ENCODE measurements at regions of chr19 and their contacts with region 1.

Region 1: GRCh38 chr19:54266133-54266532 is 9.1 kb upstream of the LILRB5 start:
- DNase-seq: peak; percentile 80
- ATAC-seq: peak; percentile 69
- H3K4me3 ChIP-seq: no peak overlapping the region
- H3K4me3 Mint-ChIP-seq: no peak overlapping the region
- H3K27ac ChIP-seq: no peak overlapping the region
- H3K27ac Mint-ChIP-seq: no peak overlapping the region
- H3K4me1 ChIP-seq: no peaks in the 10 kb centered on the region
- H3K4me1 Mint-ChIP-seq: peaks cover 4% of the 10 kb centered on the region
- H3K27me3 ChIP-seq: peaks cover 0 to 20% (median 6%) of the 10 kb centered on the region in 4 experiments
- H3K27me3 Mint-ChIP-seq: peaks cover 34% of the 10 kb centered on the region
- CTCF ChIP-seq: peak; percentile 87

Region 2: DNA sequence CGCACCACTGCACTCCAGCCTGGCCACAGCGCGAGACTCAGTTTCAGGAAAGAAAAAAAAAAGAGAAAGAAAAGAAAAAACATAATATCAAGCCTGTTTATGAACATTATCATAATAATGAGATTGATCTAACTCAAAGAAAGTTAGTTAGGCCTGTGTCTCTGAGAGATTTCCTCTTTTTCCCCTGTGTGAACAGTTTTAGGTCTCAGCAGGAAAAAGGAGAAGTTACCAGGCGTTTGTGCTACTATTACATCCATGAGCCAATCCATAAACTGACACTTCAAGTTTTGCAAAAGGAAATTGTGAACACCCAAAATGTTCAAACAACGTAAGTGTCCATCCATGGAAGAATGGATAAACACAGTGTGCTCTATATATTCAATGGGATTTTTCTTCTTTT is 188.8 kb before region 1 on chr19:
- CTCF ChIA-PET with region 1: no interaction called
- POLR2A ChIA-PET with region 1: no interaction called
- intact Hi-C with region 1: no loop called
- DNase-seq: no peak
- ATAC-seq: no peak
- H3K4me3 ChIP-seq: no peak overlapping the region
- H3K4me3 Mint-ChIP-seq: no peak overlapping the region
- H3K27ac ChIP-seq: no peak overlapping the region
- H3K27ac Mint-ChIP-seq: no peak overlapping the region
- H3K4me1 ChIP-seq: no peaks in the 10 kb centered on the region
- H3K4me1 Mint-ChIP-seq: no peaks in the 10 kb centered on the region
- H3K27me3 ChIP-seq: peaks cover 0 to 3% (median 0%) of the 10 kb centered on the region in 4 experiments
- H3K27me3 Mint-ChIP-seq: peaks cover 6% of the 10 kb centered on the region
- CTCF ChIP-seq: no peak

Region 3: DNA sequence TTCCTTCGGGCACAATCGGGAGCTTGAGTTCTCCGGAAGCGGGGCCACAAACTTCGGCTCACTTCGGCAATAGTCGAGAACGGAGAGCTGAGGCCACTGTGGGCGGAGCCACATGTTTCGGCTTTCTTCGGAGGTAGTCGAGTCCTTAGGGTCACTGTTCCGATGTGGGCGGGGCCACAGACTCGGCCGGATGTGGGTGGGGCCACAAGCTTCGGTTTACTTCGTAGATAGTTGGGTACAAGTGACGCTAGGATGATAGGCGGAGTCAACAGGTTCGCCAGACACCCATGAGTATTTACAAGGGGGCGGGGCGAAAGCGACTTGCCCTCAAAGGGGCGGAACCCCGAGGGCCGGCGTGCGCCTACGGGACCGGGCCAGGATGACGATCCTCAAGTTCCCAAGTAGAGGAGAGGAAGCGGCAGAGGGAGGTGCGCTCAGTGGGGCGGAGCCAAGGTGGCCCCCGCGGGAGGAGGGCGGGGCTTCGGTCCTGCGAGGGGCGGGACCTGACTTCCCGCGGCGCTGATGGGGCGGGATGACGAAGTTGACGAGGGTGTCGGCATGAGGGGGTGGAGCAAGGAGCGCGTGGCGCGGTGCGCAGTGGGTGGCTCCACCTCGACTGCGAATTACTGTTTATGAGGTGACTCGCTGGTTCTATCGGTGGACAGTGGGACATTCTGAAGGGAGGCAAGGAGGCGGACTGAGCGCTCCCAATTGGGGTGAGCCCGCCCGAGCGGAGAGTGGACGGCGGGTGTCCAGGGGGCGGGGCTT is 76.2 kb before region 1 on chr19:
- CTCF ChIA-PET with region 1: interaction called, 14 read pairs
- POLR2A ChIA-PET with region 1: no interaction called
- intact Hi-C with region 1: no loop called
- DNase-seq: peak; percentile 100
- ATAC-seq: peak; percentile 51
- H3K4me3 ChIP-seq: peak overlapping the region; percentile 31 to 87 (median 81)
- H3K4me3 Mint-ChIP-seq: peak overlapping the region; percentile 94
- H3K27ac ChIP-seq: peak overlapping the region; percentile 96 to 99
- H3K27ac Mint-ChIP-seq: peak overlapping the region; percentile 99
- H3K4me1 ChIP-seq: peaks cover 18 to 22% of the 10 kb centered on the region in 2 donors
- H3K4me1 Mint-ChIP-seq: peaks cover 32% of the 10 kb centered on the region
- H3K27me3 ChIP-seq: no peaks in the 10 kb centered on the region
- H3K27me3 Mint-ChIP-seq: no peaks in the 10 kb centered on the region
- CTCF ChIP-seq: no peak

Region 4: GRCh38 chr19:54287456-54287855 is 21.3 kb after region 1 on chr19:
- CTCF ChIA-PET with region 1: interaction called, 49 read pairs
- POLR2A ChIA-PET with region 1: interaction called, 3 read pairs
- intact Hi-C with region 1: no loop called
- DNase-seq: no peak
- ATAC-seq: no peak
- H3K4me3 ChIP-seq: no peak overlapping the region
- H3K4me3 Mint-ChIP-seq: no peak overlapping the region
- H3K27ac ChIP-seq: no peak overlapping the region
- H3K27ac Mint-ChIP-seq: peak overlapping the region; percentile 21
- H3K4me1 ChIP-seq: peaks cover 70 to 76% of the 10 kb centered on the region in 2 donors
- H3K4me1 Mint-ChIP-seq: peaks cover 85% of the 10 kb centered on the region
- H3K27me3 ChIP-seq: peaks cover 0 to 8% (median 0%) of the 10 kb centered on the region in 4 experiments
- H3K27me3 Mint-ChIP-seq: peaks cover 9% of the 10 kb centered on the region
- CTCF ChIP-seq: no peak

Region 5: GRCh38 chr19:54305141-54305540 is 39.0 kb after region 1 on chr19:
- CTCF ChIA-PET with region 1: interaction called, 12 read pairs
- POLR2A ChIA-PET with region 1: no interaction called
- intact Hi-C with region 1: no loop called
- DNase-seq: no peak
- ATAC-seq: no peak
- H3K4me3 ChIP-seq: no peak overlapping the region
- H3K4me3 Mint-ChIP-seq: no peak overlapping the region
- H3K27ac ChIP-seq: no peak overlapping the region
- H3K27ac Mint-ChIP-seq: no peak overlapping the region
- H3K4me1 ChIP-seq: peaks cover 6 to 7% of the 10 kb centered on the region in 2 donors
- H3K4me1 Mint-ChIP-seq: peaks cover 7% of the 10 kb centered on the region
- H3K27me3 ChIP-seq: peaks cover 0 to 60% (median 21%) of the 10 kb centered on the region in 4 experiments
- H3K27me3 Mint-ChIP-seq: peaks cover 47% of the 10 kb centered on the region
- CTCF ChIP-seq: no peak

Region 6: GRCh38 chr19:54325194-54325621 is 59.1 kb after region 1 on chr19:
- CTCF ChIA-PET with region 1: interaction called, 30 read pairs
- POLR2A ChIA-PET with region 1: interaction called, 5 read pairs
- intact Hi-C with region 1: no loop called
- DNase-seq: peak; percentile 79
- ATAC-seq: peak; percentile 70
- H3K4me3 ChIP-seq: no peak overlapping the region
- H3K4me3 Mint-ChIP-seq: peak overlapping the region; percentile 42
- H3K27ac ChIP-seq: no peak overlapping the region
- H3K27ac Mint-ChIP-seq: peak overlapping the region; percentile 74
- H3K4me1 ChIP-seq: peaks cover 39 to 48% of the 10 kb centered on the region in 2 donors
- H3K4me1 Mint-ChIP-seq: peaks cover 39% of the 10 kb centered on the region
- H3K27me3 ChIP-seq: no peaks in the 10 kb centered on the region
- H3K27me3 Mint-ChIP-seq: peaks cover 8% of the 10 kb centered on the region
- CTCF ChIP-seq: peak; percentile 98

Region 7: GRCh38 chr19:54390942-54391577 is 124.9 kb after region 1 on chr19:
- CTCF ChIA-PET with region 1: interaction called, 60 read pairs
- POLR2A ChIA-PET with region 1: no interaction called
- intact Hi-C with region 1: no loop called
- DNase-seq: peak; percentile 85
- ATAC-seq: peak; percentile 34
- H3K4me3 ChIP-seq: no peak overlapping the region
- H3K4me3 Mint-ChIP-seq: peak overlapping the region; percentile 68
- H3K27ac ChIP-seq: no peak overlapping the region
- H3K27ac Mint-ChIP-seq: peak overlapping the region; percentile 73
- H3K4me1 ChIP-seq: peaks cover 41 to 50% of the 10 kb centered on the region in 2 donors
- H3K4me1 Mint-ChIP-seq: peaks cover 46% of the 10 kb centered on the region
- H3K27me3 ChIP-seq: peaks cover 0 to 1% (median 0%) of the 10 kb centered on the region in 4 experiments
- H3K27me3 Mint-ChIP-seq: peaks cover 17% of the 10 kb centered on the region
- CTCF ChIP-seq: peak; percentile 94

Measured in B cell (primary cell).